ENCODE measurements at regions of chr7 and their contacts with region 1.

Region 1: GRCh38 chr7:16645593-16646471 is at the starts of genes ANKMY2 and BZW2:
- DNase-seq: peak; percentile 96
- ATAC-seq: peak; percentile 86
- H3K4me3 ChIP-seq: peak within 1 kb of the TSS; percentile 75 to 99 (median 91)
- H3K4me3 Mint-ChIP-seq: peak within 1 kb of the TSS; percentile 99
- H3K27ac ChIP-seq: peak within 1 kb of the TSS; percentile 84 to 89
- H3K27ac Mint-ChIP-seq: peak within 1 kb of the TSS; percentile 99
- H3K4me1 ChIP-seq: peaks cover 20 to 26% of the 10 kb centered on the region in 2 donors
- H3K4me1 Mint-ChIP-seq: peaks cover 61% of the 10 kb centered on the region
- H3K27me3 ChIP-seq: no peaks in the 10 kb centered on the region
- H3K27me3 Mint-ChIP-seq: no peaks in the 10 kb centered on the region
- CTCF ChIP-seq: no peak
- total RNA-seq, gene ANKMY2: 17.8 and 18.2 TPM in 2 replicates
- total RNA-seq, gene BZW2: 17.0 and 18.4 TPM in 2 replicates

Region 2: GRCh38 chr7:16684935-16685334 is 39.1 kb after region 1 on chr7:
- CTCF ChIA-PET with region 1: interaction called, 3 read pairs
- POLR2A ChIA-PET with region 1: no interaction called
- intact Hi-C with region 1: loop called (anchors 5 kb)
- DNase-seq: peak; percentile 14
- ATAC-seq: peak; percentile 24
- H3K4me3 ChIP-seq: no peak overlapping the region
- H3K4me3 Mint-ChIP-seq: peak overlapping the region; percentile 67
- H3K27ac ChIP-seq: peak overlapping the region in 1 of 2 donors; percentile 15
- H3K27ac Mint-ChIP-seq: peak overlapping the region; percentile 68
- H3K4me1 ChIP-seq: peaks cover 8 to 14% of the 10 kb centered on the region in 2 donors
- H3K4me1 Mint-ChIP-seq: peaks cover 22% of the 10 kb centered on the region
- H3K27me3 ChIP-seq: no peaks in the 10 kb centered on the region
- H3K27me3 Mint-ChIP-seq: no peaks in the 10 kb centered on the region
- CTCF ChIP-seq: no peak

Region 3: DNA sequence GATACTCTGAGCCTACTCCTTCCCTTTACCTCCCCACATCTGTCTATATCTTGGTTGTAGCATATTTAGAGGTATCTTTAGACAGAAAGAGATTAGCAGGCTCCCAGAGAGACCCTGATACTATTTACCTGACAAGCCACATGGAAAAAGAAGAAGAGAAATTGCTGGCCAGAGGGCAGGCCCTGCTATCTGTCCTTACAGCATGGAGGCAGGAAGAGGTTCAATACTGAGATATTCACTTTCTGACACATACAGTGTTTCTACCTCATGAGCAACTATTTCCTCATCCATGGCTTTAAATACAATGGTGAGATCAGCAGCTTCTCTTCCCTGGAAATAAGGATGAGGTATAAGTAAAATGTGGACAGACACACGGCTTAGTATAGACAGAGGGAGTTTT is 73.9 kb after region 1 on chr7:
- CTCF ChIA-PET with region 1: no interaction called
- POLR2A ChIA-PET with region 1: no interaction called
- intact Hi-C with region 1: no loop called
- DNase-seq: no peak
- ATAC-seq: no peak
- H3K4me3 ChIP-seq: no peak overlapping the region
- H3K4me3 Mint-ChIP-seq: no peak overlapping the region
- H3K27ac ChIP-seq: no peak overlapping the region
- H3K27ac Mint-ChIP-seq: no peak overlapping the region
- H3K4me1 ChIP-seq: no peaks in the 10 kb centered on the region
- H3K4me1 Mint-ChIP-seq: no peaks in the 10 kb centered on the region
- H3K27me3 ChIP-seq: no peaks in the 10 kb centered on the region
- H3K27me3 Mint-ChIP-seq: no peaks in the 10 kb centered on the region
- CTCF ChIP-seq: no peak

Region 4: GRCh38 chr7:16753102-16753931 is 107.5 kb after region 1 on chr7 and contains the start of gene TSPAN13:
- CTCF ChIA-PET with region 1: no interaction called
- POLR2A ChIA-PET with region 1: no interaction called
- intact Hi-C with region 1: loop called (anchors 1 kb)
- DNase-seq: peak; percentile 87
- ATAC-seq: peak; percentile 86
- H3K4me3 ChIP-seq: peak within 1 kb of the TSS; percentile 80 to 92 (median 86)
- H3K4me3 Mint-ChIP-seq: peak within 1 kb of the TSS; percentile 100
- H3K27ac ChIP-seq: peak within 1 kb of the TSS; percentile 58 to 71
- H3K27ac Mint-ChIP-seq: peak within 1 kb of the TSS; percentile 96
- H3K4me1 ChIP-seq: peaks cover 29% of the 10 kb centered on the region in 2 donors
- H3K4me1 Mint-ChIP-seq: peaks cover 36% of the 10 kb centered on the region
- H3K27me3 ChIP-seq: no peaks in the 10 kb centered on the region
- H3K27me3 Mint-ChIP-seq: no peaks in the 10 kb centered on the region
- CTCF ChIP-seq: no peak
- total RNA-seq, gene TSPAN13: 26.2 and 26.3 TPM in 2 replicates

Region 5: GRCh38 chr7:16762177-16762576 is 116.3 kb after region 1 on chr7:
- CTCF ChIA-PET with region 1: no interaction called
- POLR2A ChIA-PET with region 1: no interaction called
- intact Hi-C with region 1: loop called (anchors 1 kb)
- DNase-seq: no peak
- ATAC-seq: no peak
- H3K4me3 ChIP-seq: no peak overlapping the region
- H3K4me3 Mint-ChIP-seq: no peak overlapping the region
- H3K27ac ChIP-seq: peak overlapping the region; percentile 15 to 87
- H3K27ac Mint-ChIP-seq: peak overlapping the region; percentile 57
- H3K4me1 ChIP-seq: peaks cover 58 to 87% of the 10 kb centered on the region in 2 donors
- H3K4me1 Mint-ChIP-seq: peaks cover 83% of the 10 kb centered on the region
- H3K27me3 ChIP-seq: no peaks in the 10 kb centered on the region
- H3K27me3 Mint-ChIP-seq: no peaks in the 10 kb centered on the region
- CTCF ChIP-seq: no peak

Measured in B cell (primary cell).